ENCODE measurements at regions of chr5 and their contacts with region 1.

Region 1: DNA sequence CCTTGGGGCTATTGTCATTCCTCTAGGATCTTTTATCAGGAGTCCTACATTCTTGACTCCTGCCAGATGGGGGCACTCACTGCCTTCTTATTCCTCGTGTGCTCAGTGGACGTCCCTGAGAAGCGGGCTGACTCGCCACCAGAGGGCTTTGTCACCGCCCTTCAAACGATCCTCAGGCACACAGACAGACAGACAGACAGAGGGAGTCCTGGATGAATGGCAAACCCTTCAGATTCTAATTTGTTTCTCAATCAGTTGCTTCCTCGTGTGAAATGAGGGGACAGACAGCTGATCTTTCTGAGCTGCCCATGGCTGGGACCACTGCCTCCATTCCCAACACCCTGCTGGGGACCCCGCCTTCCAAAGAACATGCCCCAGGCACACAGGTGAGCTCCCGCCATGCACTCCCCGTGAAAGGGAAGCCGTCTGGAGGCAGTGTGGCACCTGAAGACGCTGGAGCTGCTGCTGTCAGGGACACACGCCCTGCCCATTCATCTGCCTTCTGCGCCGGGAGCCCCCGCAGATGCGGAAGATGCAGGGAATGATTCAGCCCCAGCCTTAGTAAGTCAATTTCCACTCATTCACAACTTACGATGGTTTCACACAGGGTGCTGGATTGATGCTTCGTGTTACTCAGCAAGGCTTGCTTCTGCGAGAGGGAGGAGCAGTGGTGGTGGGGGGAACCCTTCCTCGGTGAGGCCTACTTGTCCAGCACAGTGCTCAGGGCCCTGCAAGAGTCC is 24.9 kb upstream of the SH3PXD2B start:
- DNase-seq: peak; percentile 90
- ATAC-seq: peak; percentile 96 to 97

Region 2: GRCh38 chr5:172640822-172641358 is 161.7 kb after region 1 on chr5 and contains the start of gene NEURL1B:
- intact Hi-C with region 1: loop called in 1 of 2 experiments (anchors 5 kb)
- DNase-seq: peak; percentile 86
- ATAC-seq: peak; percentile 91 to 92
- total RNA-seq, gene NEURL1B: 20.6 to 33.6 TPM

Region 3: DNA sequence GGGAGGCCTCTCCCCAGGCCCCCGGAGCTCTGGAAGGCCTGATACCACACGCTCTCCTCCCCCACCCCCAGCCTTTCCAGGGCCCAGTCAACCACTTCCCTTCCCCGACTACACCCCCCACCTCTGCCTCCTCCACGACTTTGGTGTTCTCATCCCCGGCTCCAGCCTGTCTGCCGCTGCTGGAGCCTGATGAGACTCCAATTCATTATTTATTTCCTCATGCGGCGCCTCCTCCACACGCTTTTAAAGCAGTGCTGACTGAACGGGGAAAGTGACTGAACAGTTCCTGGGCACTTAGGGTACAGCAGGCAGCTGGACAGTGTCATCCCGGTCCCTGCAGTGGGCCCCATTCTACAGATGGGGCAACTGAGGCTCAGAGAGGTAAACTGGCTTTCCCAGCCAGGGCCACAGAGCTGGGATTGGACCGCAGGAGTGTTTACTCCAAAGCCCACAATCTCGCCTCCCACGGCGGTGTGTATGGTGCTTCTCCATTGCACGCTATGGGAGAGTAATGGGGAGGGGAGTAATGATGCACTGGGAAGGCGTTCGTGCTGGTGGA is 464.1 kb after region 1 on chr5:
- intact Hi-C with region 1: loop called in 1 of 2 experiments (anchors 10 kb)
- DNase-seq: peak; percentile 70
- ATAC-seq: peak in 1 of 2 donors; percentile 60

Region 4: GRCh38 chr5:173823711-173824528 is 1344.7 kb after region 1 on chr5:
- intact Hi-C with region 1: no loop called
- DNase-seq: no peak
- ATAC-seq: peak; percentile 68 to 79

Measured in left cardiac atrium (tissue), 4 donors.